Activated CD4-positive, alpha-beta memory T cell treated with anti-CD3 and anti-CD28 coated beads for 36 hours (primary cell): ENCODE measurements at regions of chr1 and their contacts with region 1.

Region 1: DNA sequence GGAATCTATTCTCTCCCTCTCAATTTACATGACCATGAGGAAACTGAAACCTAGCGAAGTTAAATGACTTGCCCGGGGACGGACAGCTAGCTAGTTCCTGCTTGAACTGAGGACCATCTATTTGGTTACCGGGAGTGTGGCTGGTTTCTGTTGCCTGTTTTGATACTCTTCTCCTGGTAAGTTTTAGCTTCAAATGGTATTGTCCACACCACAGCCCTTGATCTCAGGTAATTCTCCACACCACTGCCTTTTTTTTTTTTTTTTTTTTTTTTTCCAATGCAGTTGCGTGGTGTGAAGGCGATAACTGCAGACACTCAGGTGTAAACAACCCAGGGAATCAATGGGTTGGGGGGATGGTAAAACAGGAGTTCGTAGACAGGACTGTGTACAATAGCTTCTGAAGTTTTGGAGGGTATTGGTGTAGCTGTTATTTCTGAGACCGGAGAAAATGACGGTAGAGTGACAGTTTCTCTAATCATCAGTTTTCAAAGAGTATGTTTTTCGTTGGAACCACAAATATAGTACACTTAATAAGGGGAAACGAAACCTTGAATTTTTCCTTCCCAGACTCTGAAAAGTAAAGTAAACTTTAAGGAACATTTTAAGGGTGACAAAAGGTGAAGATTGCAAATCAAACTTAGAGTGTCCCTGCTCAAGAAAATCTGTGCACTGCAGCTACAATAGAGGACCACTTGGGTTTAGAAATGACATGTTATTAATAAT is 125.3 kb upstream of the CACYBP start:
- DNase-seq: peak; percentile 15
- H3K4me3 Mint-ChIP-seq: peak overlapping the region; percentile 54
- H3K27ac Mint-ChIP-seq: no peak overlapping the region
- H3K4me1 Mint-ChIP-seq: peaks cover 27% of the 10 kb centered on the region
- H3K27me3 Mint-ChIP-seq: no peaks in the 10 kb centered on the region

Region 2: DNA sequence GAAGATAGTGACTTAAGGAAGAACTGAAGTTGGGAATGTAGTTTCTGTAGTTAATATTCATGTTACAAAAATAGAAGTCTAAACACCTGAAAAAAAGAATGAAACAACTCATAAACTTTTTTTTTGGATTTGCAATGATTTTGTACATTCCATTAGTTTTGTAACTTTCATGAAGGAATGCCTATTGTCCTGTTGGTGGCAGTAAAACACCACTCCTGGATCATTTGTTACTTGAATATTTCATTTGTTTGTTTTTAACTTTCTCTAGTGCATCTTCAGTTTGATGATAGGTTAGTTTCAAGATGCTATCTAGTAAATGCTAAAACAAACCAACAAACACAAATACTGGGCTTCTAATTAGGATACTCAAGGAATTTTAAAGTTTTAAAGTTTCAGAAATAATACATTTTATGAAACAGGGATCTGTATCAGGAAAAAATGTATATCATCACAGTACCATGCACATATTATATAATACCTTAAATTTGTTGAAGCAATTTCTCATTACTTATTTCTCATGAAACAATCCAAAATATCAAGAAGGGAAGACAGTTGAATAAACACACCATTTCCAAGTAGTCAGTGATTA is 104.4 kb before region 1 on chr1:
- CTCF ChIA-PET with region 1: no interaction called
- POLR2A ChIA-PET with region 1: no interaction called
- intact Hi-C with region 1: loop called (anchors 10 kb)
- DNase-seq: no peak
- H3K4me3 Mint-ChIP-seq: no peak overlapping the region
- H3K27ac Mint-ChIP-seq: no peak overlapping the region
- H3K4me1 Mint-ChIP-seq: peaks cover 5% of the 10 kb centered on the region
- H3K27me3 Mint-ChIP-seq: no peaks in the 10 kb centered on the region

Region 3: GRCh38 chr1:174829990-174830389 is 44.5 kb before region 1 on chr1:
- CTCF ChIA-PET with region 1: no interaction called
- POLR2A ChIA-PET with region 1: no interaction called
- intact Hi-C with region 1: no loop called
- DNase-seq: no peak
- H3K4me3 Mint-ChIP-seq: no peak overlapping the region
- H3K27ac Mint-ChIP-seq: no peak overlapping the region
- H3K4me1 Mint-ChIP-seq: no peaks in the 10 kb centered on the region
- H3K27me3 Mint-ChIP-seq: no peaks in the 10 kb centered on the region